ENCODE measurements at regions of chr1 and their contacts with region 1.

Region 1: DNA sequence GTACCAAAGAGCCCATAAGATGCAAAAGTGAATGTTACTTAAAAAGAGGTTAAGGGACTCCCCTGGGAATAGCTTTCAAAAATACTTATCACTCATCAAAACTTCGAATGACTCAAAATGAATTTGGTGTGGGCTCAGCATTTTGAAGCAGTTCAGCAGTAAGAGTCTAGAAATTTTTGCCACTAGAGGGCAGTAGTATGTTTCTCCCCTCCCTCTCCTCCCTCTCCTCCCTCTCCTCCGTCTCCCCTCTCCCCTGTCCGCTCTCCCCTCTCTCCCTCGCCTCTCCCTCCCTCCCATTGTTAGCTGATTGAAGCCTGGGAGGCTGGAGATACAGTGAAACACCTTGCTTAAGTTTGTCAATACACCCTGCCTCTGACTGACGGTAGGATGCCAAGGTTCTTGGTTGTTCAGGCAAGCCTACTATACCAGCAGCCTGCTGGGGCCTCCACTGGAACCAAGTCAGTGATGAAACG is 70.8 kb upstream of the TENT5C start:
- DNase-seq: peak; percentile 55
- CTCF ChIP-seq: peak; percentile 53

Region 2: GRCh38 chr1:117301901-117302300 is 233.1 kb before region 1 on chr1:
- CTCF ChIA-PET with region 1: no interaction called
- POLR2A ChIA-PET with region 1: no interaction called
- DNase-seq: no peak
- CTCF ChIP-seq: no peak

Region 3: GRCh38 chr1:117473063-117473462 is 62.0 kb before region 1 on chr1:
- CTCF ChIA-PET with region 1: no interaction called
- POLR2A ChIA-PET with region 1: no interaction called
- DNase-seq: no peak
- CTCF ChIP-seq: no peak

Region 4: GRCh38 chr1:117512743-117513321 is 22.2 kb before region 1 on chr1:
- CTCF ChIA-PET with region 1: interaction called, 47 read pairs
- POLR2A ChIA-PET with region 1: no interaction called
- DNase-seq: no peak
- CTCF ChIP-seq: peak; percentile 51

Region 5: GRCh38 chr1:117582451-117582850 is 47.4 kb after region 1 on chr1:
- CTCF ChIA-PET with region 1: interaction called, 12 read pairs
- POLR2A ChIA-PET with region 1: no interaction called
- DNase-seq: no peak
- CTCF ChIP-seq: no peak

Region 6: GRCh38 chr1:117654493-117655219 is 119.6 kb after region 1 on chr1:
- CTCF ChIA-PET with region 1: interaction called, 15 read pairs
- POLR2A ChIA-PET with region 1: no interaction called
- DNase-seq: peak; percentile 78
- CTCF ChIP-seq: no peak

Region 7: DNA sequence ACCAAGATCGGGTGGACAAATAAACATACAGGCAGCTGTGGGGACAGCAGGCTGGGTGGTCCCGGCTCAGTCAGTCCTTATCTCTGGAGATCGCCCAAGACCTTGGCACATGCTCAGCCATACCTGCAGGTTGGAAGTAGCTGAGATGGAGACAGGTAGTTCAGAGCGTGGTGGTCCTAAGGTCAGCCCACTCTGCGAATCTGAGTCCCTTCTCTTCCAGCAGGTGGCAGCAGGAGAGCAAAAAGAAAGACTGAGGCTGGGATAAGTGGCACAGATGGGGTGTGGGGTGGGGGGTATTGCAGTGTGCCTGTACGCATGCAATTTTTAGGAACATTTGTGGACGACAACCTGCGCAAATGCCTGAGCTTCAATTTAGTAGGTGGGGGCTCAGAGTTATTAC is 175.7 kb after region 1 on chr1:
- CTCF ChIA-PET with region 1: interaction called, 13 read pairs
- POLR2A ChIA-PET with region 1: no interaction called
- DNase-seq: no peak
- CTCF ChIP-seq: peak; percentile 22

Measured in GM10248 (cell line).